ENCODE measurements at regions of chr11 and their contacts with region 1.

Region 1: GRCh38 chr11:75547580-75548058 is 14.4 kb upstream of the SERPINH1 start:
- DNase-seq: peak; percentile 57
- H3K4me3 ChIP-seq: no peak overlapping the region
- H3K27ac ChIP-seq: no peak overlapping the region
- H3K4me1 ChIP-seq: no peaks in the 10 kb centered on the region
- H3K27me3 ChIP-seq: no peaks in the 10 kb centered on the region
- CTCF ChIP-seq: peak; percentile 74

Region 2: GRCh38 chr11:75582895-75583717 is 35.5 kb after region 1 on chr11:
- intact Hi-C with region 1: loop called (anchors 5 kb)
- DNase-seq: peak; percentile 44
- H3K4me3 ChIP-seq: peak overlapping the region; percentile 43
- H3K27ac ChIP-seq: peak overlapping the region; percentile 39
- H3K4me1 ChIP-seq: no peaks in the 10 kb centered on the region
- H3K27me3 ChIP-seq: peaks cover 5% of the 10 kb centered on the region
- CTCF ChIP-seq: no peak

Region 3: GRCh38 chr11:75615706-75616105 is 68.1 kb after region 1 on chr11:
- intact Hi-C with region 1: no loop called
- DNase-seq: no peak
- H3K4me3 ChIP-seq: no peak overlapping the region
- H3K27ac ChIP-seq: no peak overlapping the region
- H3K4me1 ChIP-seq: no peaks in the 10 kb centered on the region
- H3K27me3 ChIP-seq: no peaks in the 10 kb centered on the region
- CTCF ChIP-seq: no peak